ENCODE measurements at regions of chr19 and their contacts with region 1.

Region 1: GRCh38 chr19:6530386-6531161 is at the start of gene TNFSF9:
- DNase-seq: peak; percentile 89

Region 2: DNA sequence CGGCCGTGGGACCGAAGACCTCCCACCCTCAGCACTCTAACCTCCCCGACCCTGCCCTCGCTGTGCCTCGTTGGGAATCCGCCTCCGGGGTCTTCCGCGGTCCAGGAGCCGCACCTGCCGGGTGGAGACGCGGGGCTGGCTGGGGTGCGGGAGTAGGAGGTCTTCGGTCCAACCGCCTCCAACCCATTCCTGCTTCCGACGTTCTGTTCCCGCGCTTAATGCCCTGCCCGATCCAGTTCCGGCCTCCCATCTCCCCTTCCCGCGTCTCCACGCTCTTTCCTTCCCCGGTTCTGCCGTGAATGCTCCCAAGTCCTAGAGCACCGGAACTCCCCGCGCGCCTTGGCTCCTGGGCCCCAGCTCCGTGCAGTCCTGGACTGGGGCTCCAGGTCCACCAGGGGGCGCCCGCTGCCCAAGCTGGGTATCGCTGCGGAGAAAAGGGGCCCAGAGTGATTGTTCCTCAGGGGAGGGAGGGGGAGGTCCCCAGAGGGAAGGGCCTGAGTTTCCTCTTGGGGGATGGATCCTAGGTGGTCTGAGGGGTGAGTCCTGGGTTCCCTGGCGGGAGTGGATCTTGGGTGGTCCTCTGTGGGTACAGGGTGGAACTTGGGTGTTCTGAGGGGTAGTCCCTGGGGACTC is 13.8 kb before region 1 on chr19:
- CTCF ChIA-PET with region 1: no interaction called
- POLR2A ChIA-PET with region 1: interaction called, 16 read pairs
- DNase-seq: peak; percentile 90

Region 3: GRCh38 chr19:6602729-6603114 is 72.1 kb after region 1 on chr19:
- CTCF ChIA-PET with region 1: no interaction called
- POLR2A ChIA-PET with region 1: interaction called, 12 read pairs
- DNase-seq: no peak